Colonic mucosa (tissue), 4 donors: ENCODE measurements at regions of chr1 and their contacts with region 1.

Region 1: GRCh38 chr1:116817582-116818064 is 63.4 kb downstream of the CD2 start:
- DNase-seq: peak; percentile 52
- H3K4me3 ChIP-seq: no peak overlapping the region
- H3K27ac ChIP-seq: no peak overlapping the region
- H3K4me1 ChIP-seq: no peaks in the 10 kb centered on the region
- H3K27me3 ChIP-seq: no peaks in the 10 kb centered on the region
- CTCF ChIP-seq: peak; percentile 57

Region 2: DNA sequence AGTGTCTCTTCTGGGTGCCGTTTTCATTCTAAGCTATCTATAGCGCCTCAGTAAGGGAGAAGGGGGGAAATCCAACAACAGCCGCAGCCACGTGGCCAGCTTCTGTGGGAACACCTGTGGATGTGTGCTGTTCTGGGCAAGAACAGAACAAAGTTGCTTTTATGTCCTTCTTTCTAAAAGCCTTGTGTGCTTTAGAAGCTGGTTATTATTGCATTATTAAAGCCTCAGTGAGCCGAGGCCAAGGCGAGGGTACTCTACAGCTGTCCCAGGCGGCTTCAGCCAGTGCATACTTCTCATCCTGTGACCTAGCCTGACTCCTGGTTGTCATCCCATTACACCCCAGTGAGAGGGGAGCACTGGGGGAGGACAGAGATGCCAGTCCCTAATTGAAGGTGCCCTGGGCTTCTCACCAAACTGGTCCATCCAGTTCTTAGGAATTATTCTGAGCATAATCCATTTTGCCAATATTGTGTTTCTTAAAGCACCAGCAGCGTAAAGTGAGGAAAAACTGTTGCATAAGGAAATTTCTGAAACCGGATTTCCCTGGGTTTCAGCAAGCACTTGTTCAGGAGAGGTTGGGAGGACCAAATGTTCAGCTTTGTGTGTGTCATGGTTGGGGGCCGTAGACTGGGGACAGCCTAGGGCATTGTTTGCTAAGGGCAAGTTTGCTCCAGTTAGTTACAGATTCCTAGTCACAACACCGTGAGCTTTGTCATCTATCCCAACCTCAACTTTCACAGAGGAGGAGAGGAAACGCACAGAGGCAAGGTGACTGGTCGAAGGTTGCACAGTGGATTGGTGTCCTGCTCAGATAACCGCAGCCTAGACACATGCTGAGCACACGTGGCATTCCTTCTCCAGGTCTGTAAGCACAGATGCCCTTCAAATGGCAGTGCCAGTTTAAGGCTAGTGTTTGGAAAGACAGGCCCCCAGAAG is 505.6 kb before region 1 on chr1:
- intact Hi-C with region 1: no loop called
- DNase-seq: peak; percentile 47
- H3K4me3 ChIP-seq: no peak overlapping the region
- H3K27ac ChIP-seq: no peak overlapping the region
- H3K4me1 ChIP-seq: no peaks in the 10 kb centered on the region
- H3K27me3 ChIP-seq: no peaks in the 10 kb centered on the region
- CTCF ChIP-seq: no peak

Region 3: DNA sequence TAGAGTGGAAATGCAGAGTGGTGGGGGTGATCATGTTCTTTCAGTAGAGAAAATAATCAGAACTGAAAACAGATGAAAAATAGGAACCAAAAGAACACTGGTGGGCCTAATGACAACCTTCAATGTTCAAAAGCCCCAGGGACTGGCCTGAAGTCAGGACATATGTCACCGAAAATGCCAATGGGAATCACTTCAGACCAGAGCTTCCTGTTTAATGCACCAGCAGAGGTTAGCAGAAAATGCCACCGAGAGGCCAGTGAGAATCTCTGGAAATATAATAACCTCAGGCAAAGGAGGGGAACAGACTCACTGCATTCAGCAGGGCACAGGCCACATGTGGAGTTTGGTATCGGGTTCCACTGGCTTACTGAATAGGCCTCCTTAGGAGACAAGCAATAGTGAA is 230.9 kb before region 1 on chr1:
- intact Hi-C with region 1: no loop called
- DNase-seq: no peak
- H3K4me3 ChIP-seq: no peak overlapping the region
- H3K27ac ChIP-seq: no peak overlapping the region
- H3K4me1 ChIP-seq: no peaks in the 10 kb centered on the region
- H3K27me3 ChIP-seq: no peaks in the 10 kb centered on the region
- CTCF ChIP-seq: no peak

Region 4: DNA sequence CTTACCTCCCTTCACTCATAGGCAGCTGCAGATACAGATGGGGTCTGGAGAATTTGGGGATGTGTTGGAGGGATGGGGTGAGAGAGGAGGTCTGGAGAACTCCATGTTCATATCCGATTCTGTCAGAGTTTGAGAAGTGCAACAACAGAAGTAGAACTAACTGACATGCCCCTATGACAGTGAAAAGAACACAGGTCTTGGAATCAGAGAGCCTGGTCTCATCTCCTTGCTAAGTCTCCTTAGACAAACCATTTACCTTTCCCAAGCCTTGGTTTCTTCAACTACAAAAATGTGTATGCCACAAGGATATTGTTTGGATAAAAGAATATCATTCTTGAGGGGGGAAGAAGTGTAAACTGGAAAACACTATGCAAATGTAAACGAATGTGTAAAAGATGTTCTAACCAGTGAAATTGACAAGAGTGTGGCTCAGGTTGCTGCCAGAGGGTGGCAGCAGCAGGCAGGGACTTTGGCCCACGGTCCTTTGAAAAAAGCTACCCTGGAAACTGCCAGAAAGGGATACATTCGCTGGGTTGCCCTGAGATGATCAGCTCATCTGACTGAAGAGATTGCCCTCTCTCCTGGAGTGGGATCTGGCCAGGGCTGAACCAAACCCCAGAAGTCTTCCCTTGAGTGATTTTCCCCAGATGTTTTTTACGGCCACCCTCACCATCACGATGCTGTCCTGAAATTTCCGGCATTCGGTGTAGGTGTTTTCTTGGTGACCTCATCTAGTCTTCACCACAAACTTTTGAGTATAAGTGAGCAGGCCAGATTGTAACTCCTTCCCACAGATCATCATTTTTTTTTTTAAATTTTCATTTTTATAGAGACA is 80.4 kb before region 1 on chr1:
- intact Hi-C with region 1: loop called (anchors 10 kb)
- DNase-seq: peak; percentile 57
- H3K4me3 ChIP-seq: no peak overlapping the region
- H3K27ac ChIP-seq: peak overlapping the region; percentile 42
- H3K4me1 ChIP-seq: no peaks in the 10 kb centered on the region
- H3K27me3 ChIP-seq: no peaks in the 10 kb centered on the region
- CTCF ChIP-seq: peak; percentile 64

Region 5: DNA sequence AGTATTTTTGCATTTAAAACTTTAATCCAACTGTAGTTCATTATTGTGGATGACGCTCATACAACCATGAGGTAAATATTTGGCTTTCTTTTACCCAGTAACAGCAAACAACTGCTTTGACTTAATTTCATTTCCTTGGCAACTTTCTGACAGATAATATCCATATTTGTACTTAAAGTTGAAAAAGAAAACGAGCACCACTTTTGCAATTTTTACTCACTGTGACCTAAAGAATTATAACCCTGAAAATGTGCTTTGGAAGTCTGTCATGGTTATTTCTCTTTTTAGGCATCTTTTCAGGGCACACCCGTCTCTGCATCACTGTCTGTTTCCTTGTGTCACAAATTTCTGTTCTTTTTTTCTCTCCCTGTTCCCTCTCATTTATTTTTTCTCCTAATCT is 64.3 kb before region 1 on chr1:
- intact Hi-C with region 1: no loop called
- DNase-seq: no peak
- H3K4me3 ChIP-seq: no peak overlapping the region
- H3K27ac ChIP-seq: no peak overlapping the region
- H3K4me1 ChIP-seq: no peaks in the 10 kb centered on the region
- H3K27me3 ChIP-seq: no peaks in the 10 kb centered on the region
- CTCF ChIP-seq: no peak

Region 6: GRCh38 chr1:116763787-116764465 is 53.7 kb before region 1 on chr1:
- intact Hi-C with region 1: loop called (anchors 10 kb)
- DNase-seq: peak; percentile 46
- H3K4me3 ChIP-seq: no peak overlapping the region
- H3K27ac ChIP-seq: peak overlapping the region; percentile 35
- H3K4me1 ChIP-seq: no peaks in the 10 kb centered on the region
- H3K27me3 ChIP-seq: no peaks in the 10 kb centered on the region
- CTCF ChIP-seq: peak; percentile 38

Region 7: DNA sequence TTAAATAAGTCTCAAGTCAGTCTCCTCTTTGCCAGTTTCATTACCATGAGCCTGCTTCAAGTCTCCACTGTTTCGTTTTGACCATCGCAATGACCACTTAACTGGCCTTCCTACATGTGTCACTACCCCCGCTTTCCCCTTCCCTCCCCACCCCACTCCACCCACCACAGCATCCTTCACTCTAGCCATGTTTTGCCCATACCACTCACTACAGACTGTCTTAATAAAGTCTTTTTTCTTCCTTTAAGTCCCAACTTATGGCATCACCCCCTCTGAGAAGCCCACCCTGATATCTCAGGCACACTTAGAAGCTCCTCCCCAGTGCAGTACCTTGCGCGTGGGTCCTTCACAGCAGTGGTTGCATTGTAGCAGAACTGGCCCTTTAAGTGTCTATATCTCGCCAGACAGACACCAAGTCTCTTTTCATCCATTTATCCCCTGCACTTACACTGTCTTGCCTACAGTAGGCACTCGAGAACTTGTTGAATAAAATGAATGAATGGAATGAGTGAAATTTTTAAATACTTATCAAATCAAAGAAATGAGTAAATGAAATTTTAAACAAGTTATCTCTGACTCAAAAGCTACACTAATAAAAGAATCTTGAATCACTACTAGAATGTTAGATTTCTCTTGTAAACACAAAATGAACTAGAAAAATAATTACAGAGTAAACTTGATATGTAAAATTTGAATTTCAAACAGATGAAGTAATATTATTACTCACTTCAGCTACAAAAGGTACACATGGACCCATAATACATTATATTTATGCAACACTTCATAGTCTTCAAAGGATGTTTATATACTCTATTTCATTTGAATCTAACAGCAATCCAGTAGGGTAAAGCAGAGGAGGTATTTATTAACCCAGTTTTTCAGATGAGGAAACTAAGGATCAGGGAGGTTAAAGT is 494.9 kb after region 1 on chr1:
- intact Hi-C with region 1: no loop called
- DNase-seq: no peak
- H3K4me3 ChIP-seq: no peak overlapping the region
- H3K27ac ChIP-seq: no peak overlapping the region
- H3K4me1 ChIP-seq: no peaks in the 10 kb centered on the region
- H3K27me3 ChIP-seq: no peaks in the 10 kb centered on the region
- CTCF ChIP-seq: peak; percentile 47